ENCODE measurements at regions of chr11 and their contacts with region 1.

Region 1: GRCh38 chr11:116853461-116854073 is 16.1 kb upstream of the APOA1 start:
- DNase-seq: peak; percentile 99
- ATAC-seq: peak; percentile 84
- H3K4me3 ChIP-seq: peak overlapping the region; percentile 50
- H3K27ac ChIP-seq: peak overlapping the region; percentile 97
- H3K4me1 ChIP-seq: peaks cover 34% of the 10 kb centered on the region
- H3K27me3 ChIP-seq: no peaks in the 10 kb centered on the region
- CTCF ChIP-seq: no peak

Region 2: GRCh38 chr11:116772443-116773202 is 80.9 kb before region 1 on chr11 and contains the start of gene BUD13:
- CTCF ChIA-PET with region 1: no interaction called
- POLR2A ChIA-PET with region 1: no interaction called
- intact Hi-C with region 1: loop called (anchors 5 kb)
- DNase-seq: peak; percentile 94
- ATAC-seq: peak; percentile 86
- H3K4me3 ChIP-seq: peak within 1 kb of the TSS; percentile 98
- H3K27ac ChIP-seq: peak within 1 kb of the TSS; percentile 75
- H3K4me1 ChIP-seq: peaks cover 23% of the 10 kb centered on the region
- H3K27me3 ChIP-seq: no peaks in the 10 kb centered on the region
- CTCF ChIP-seq: no peak
- total RNA-seq, gene BUD13: 28.9 and 38.0 TPM in 2 replicates

Region 3: DNA sequence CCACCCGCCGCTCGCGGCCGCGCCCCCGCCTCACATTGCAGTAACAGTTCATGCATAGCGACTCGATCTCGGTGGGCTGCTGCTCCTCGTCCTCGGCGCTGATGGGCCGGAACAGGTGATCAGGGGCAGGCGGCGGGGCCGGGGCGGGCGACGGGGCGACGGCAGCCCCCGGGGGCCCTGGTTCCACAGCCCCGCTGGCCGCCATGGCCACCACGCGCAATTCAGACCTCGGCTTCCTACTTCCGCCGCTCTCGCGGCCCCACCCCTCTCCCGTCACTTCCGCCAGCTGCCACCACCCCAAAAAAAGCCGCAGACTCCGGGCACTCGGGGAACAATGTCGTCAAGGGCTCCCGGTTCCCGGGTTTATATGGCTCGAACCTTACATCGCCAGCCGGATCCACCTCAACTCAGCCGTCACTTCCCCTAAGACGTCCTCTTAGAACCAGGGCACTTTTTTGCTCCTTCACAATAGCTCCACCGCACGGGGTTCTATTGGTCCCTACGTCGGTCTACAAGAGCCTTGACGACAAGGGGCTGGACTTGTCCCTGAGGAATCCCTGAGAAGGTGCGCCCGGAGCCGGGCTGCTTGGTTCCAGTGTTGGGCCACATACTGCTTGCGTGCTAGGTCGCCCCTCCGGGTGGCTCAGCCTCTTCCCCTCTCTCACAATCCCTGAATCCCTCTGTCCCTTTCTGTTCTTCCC is 65.6 kb before region 1 on chr11 and contains the start of gene ZPR1:
- CTCF ChIA-PET with region 1: no interaction called
- POLR2A ChIA-PET with region 1: no interaction called
- intact Hi-C with region 1: loop called (anchors 5 kb)
- DNase-seq: peak; percentile 64
- ATAC-seq: peak; percentile 81
- H3K4me3 ChIP-seq: peak within 1 kb of the TSS; percentile 83
- H3K27ac ChIP-seq: peak within 1 kb of the TSS; percentile 11; the same call in 1 of the 2 replicates
- H3K4me1 ChIP-seq: peaks cover 37% of the 10 kb centered on the region
- H3K27me3 ChIP-seq: no peaks in the 10 kb centered on the region
- CTCF ChIP-seq: no peak
- total RNA-seq, gene ZPR1: 86.5 and 89.5 TPM in 2 replicates

Region 4: GRCh38 chr11:116835791-116836631 is 17.6 kb before region 1 on chr11:
- CTCF ChIA-PET with region 1: interaction called, 16 read pairs
- POLR2A ChIA-PET with region 1: interaction called, 10 read pairs
- intact Hi-C with region 1: no loop called
- DNase-seq: peak; percentile 98
- ATAC-seq: peak; percentile 86
- H3K4me3 ChIP-seq: peak overlapping the region; percentile 63
- H3K27ac ChIP-seq: no peak overlapping the region
- H3K4me1 ChIP-seq: peaks cover 7% of the 10 kb centered on the region
- H3K27me3 ChIP-seq: no peaks in the 10 kb centered on the region
- CTCF ChIP-seq: peak; percentile 88

Region 5: GRCh38 chr11:116871248-116871647 is 17.7 kb after region 1 on chr11:
- CTCF ChIA-PET with region 1: no interaction called
- POLR2A ChIA-PET with region 1: no interaction called
- intact Hi-C with region 1: loop called (anchors 1 kb)
- DNase-seq: peak; percentile 92
- ATAC-seq: peak; percentile 99
- H3K4me3 ChIP-seq: 0 out of 2 replicates have a peak overlapping the region, but pooled peaks have one; percentile 7
- H3K27ac ChIP-seq: peak overlapping the region; percentile 83
- H3K4me1 ChIP-seq: peaks cover 19% of the 10 kb centered on the region
- H3K27me3 ChIP-seq: no peaks in the 10 kb centered on the region
- CTCF ChIP-seq: no peak

Region 6: DNA sequence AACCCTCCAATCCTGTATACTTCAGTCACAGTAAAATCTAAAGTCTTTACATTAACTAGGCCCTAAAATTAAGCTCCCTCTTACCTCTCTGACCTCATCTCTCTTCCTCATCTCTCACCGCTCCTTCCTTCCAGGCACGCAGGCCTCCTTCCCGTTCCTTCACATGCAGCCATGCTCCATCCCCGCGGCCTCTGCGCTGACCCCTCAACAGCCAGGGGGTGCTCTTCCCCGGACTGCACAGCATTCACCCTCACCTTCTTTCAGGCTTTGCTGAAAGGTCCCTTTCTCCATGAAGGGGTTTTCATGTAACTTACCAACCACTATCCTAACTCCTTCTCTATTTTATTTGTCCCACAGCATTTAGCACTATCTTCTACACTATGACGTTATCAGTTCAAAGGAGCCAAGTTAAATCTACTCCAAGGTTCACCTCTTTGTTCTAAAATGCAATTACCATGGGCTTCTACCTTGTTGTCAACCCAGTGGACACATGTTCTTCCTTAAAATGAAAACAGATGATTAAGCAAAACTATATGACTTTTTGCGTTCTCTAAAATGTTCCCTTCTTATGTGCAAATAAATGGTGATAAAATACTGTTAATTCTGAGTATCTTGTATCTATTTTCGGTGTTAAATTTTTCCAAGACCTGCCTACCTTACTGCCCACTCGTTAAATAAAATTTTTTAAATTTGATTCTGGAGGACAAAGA is 41.6 kb after region 1 on chr11:
- CTCF ChIA-PET with region 1: no interaction called
- POLR2A ChIA-PET with region 1: no interaction called
- intact Hi-C with region 1: no loop called
- DNase-seq: no peak
- ATAC-seq: no peak
- H3K4me3 ChIP-seq: no peak overlapping the region
- H3K27ac ChIP-seq: no peak overlapping the region
- H3K4me1 ChIP-seq: peaks cover 5% of the 10 kb centered on the region; the same call in 1 of the 2 replicates
- H3K27me3 ChIP-seq: no peaks in the 10 kb centered on the region
- CTCF ChIP-seq: peak; percentile 37; the same call in 1 of the 2 replicates

Region 7: DNA sequence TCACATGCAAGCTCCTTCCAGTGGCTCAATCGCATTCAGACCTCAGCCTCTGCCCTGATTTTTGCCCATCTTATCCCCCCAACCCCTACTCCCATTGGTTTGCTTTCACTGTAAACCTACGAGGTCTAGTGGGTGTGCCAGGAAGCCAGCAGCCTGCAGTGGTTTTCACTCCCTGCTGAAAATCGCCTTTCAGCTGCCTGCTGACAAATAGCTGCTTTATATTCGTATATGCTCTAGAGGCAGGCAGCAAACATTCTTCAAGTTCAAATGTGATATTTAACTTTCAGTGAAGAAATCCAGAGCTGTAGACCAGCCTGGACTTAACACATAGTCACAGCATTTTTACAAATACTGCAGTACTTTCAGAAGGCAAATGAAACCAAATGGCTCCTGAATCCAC is 76.6 kb after region 1 on chr11:
- CTCF ChIA-PET with region 1: no interaction called
- POLR2A ChIA-PET with region 1: no interaction called
- intact Hi-C with region 1: no loop called
- DNase-seq: no peak
- ATAC-seq: no peak
- H3K4me3 ChIP-seq: no peak overlapping the region
- H3K27ac ChIP-seq: no peak overlapping the region
- H3K4me1 ChIP-seq: peaks cover 23% of the 10 kb centered on the region
- H3K27me3 ChIP-seq: no peaks in the 10 kb centered on the region
- CTCF ChIP-seq: no peak

Region 8: GRCh38 chr11:117010808-117011540 is 157.4 kb after region 1 on chr11:
- CTCF ChIA-PET with region 1: no interaction called
- POLR2A ChIA-PET with region 1: no interaction called
- intact Hi-C with region 1: loop called (anchors 1 kb)
- DNase-seq: peak; percentile 98
- ATAC-seq: peak; percentile 97
- H3K4me3 ChIP-seq: no peak overlapping the region
- H3K27ac ChIP-seq: peak overlapping the region; percentile 70
- H3K4me1 ChIP-seq: peaks cover 21% of the 10 kb centered on the region
- H3K27me3 ChIP-seq: no peaks in the 10 kb centered on the region
- CTCF ChIP-seq: no peak

Region 9: DNA sequence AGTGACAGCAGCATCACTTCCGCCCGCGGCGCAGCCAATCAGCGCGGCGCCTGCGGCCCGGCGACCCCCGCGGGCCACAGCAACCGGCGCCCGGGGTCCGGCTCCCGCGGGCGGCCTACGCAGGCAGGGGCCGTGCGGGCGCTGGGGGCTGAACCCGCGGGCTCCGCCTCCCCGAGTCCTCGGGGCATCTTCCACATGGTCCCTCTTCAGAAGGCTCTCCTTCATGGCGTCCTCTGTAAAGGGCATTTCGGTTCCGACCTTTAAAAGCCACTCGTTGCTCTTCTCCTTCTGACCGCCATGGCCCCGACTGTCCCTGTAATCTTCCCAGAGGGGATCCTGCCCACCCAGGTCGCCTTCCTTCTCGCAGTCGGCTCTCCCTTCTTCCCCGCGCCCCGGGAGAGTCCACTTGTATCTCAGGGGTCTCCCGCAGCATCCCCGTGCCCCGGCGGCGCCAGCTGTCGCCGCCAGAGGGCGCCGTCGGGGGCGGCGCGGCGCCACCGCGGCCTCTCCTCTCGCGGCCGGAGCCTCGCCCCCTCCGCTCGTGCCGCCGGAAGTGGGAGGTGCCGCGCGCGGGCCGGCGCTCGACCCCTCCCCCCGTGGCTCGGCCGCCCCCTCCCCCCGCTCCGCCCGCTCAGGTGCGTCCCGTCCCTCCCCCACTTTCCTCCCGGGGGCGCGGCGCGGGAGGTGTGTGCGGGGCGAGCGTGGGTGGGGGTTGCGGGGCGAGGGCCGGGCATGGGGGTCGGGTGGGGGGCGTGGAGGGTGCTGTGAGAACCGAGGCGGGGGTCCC is 378.7 kb after region 1 on chr11 and contains the start of gene RNF214:
- CTCF ChIA-PET with region 1: no interaction called
- POLR2A ChIA-PET with region 1: no interaction called
- intact Hi-C with region 1: loop called (anchors 10 kb)
- DNase-seq: peak; percentile 93
- ATAC-seq: peak; percentile 78
- H3K4me3 ChIP-seq: peak within 1 kb of the TSS; percentile 86
- H3K27ac ChIP-seq: peak within 1 kb of the TSS; percentile 25
- H3K4me1 ChIP-seq: peaks cover 23% of the 10 kb centered on the region
- H3K27me3 ChIP-seq: no peaks in the 10 kb centered on the region
- CTCF ChIP-seq: peak; percentile 87
- total RNA-seq, gene RNF214: 7.4 TPM in 2 replicates